Heart left ventricle (tissue), 16 donors: ENCODE measurements at regions of chr12 and their contacts with region 1.

Region 1: DNA sequence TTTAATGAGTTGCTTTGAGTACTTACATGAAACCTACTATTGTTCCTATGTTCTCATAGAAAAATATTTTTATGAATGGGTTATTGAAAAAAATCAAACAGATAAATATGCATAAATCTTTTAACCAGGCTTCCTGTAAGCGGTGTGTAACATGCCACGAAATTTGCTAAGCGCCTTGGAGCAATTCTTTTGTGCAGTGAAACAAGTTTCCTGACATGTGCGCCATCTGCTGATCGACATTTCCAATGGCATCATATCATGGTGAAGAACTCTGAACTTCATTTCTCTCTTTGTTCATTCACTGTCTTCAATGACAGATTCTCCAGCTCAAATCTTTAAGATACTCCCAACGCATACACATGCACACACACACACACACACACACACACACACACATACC is 145.6 kb upstream of the NAV3 start:
- DNase-seq: peak; percentile 33 to 55 (median 50)
- ATAC-seq: peak; percentile 58 to 82 (median 72)
- H3K4me3 ChIP-seq: peak overlapping the region in 6 of 12 donors; percentile 1 to 22 (median 11)
- H3K27ac ChIP-seq: no peak overlapping the region
- H3K4me1 ChIP-seq: peaks cover 0 to 6% (median 0%) of the 10 kb centered on the region in 12 donors
- H3K27me3 ChIP-seq: no peaks in the 10 kb centered on the region
- CTCF ChIP-seq: peak in 11 of 12 donors; percentile 33 to 70 (median 54)
- POLR2A ChIP-seq: no peak

Region 2: DNA sequence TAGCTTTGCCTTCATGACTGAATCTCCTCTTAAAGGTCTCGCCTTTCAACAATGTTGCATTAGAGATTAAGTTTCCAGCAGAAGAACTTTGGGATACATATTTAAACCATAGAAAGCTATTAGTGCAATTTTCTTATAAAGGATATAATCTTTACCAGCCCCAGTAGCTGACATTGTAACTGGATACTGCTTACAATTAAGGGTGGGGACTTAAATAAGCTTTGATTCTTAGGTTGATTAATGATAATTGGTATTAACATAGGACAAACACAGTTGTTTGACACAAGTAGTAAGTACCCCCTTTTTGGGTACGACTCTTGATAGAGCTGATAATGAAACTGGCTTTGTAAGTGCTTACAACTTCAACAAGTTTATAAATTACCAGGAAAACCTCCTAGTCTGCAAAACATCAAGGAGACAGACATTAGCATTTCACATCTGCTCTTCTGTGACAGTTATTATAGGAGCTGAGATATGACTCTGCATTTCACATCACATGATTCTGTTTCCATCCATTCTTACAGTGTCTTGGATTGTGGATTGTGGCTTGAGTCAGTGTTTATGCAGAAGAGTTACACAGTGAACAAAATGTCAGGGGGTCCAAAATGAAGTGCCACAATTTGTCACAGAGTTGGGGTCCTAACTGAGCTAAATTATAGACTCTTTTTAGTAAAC is 370.6 kb before region 1 on chr12:
- intact Hi-C with region 1: loop called in 1 of 10 experiments (anchors 10 kb)
- DNase-seq: no peak
- ATAC-seq: peak in 1 of 4 donors; percentile 33
- H3K4me3 ChIP-seq: no peak overlapping the region
- H3K27ac ChIP-seq: no peak overlapping the region
- H3K4me1 ChIP-seq: peaks cover 0 to 3% (median 0%) of the 10 kb centered on the region in 12 donors
- H3K27me3 ChIP-seq: no peaks in the 10 kb centered on the region
- CTCF ChIP-seq: no peak
- POLR2A ChIP-seq: no peak

Region 3: GRCh38 chr12:77433799-77434198 is 251.3 kb before region 1 on chr12:
- intact Hi-C with region 1: no loop called
- DNase-seq: no peak
- ATAC-seq: no peak
- H3K4me3 ChIP-seq: no peak overlapping the region
- H3K27ac ChIP-seq: no peak overlapping the region
- H3K4me1 ChIP-seq: peaks cover 0 to 6% (median 0%) of the 10 kb centered on the region in 12 donors
- H3K27me3 ChIP-seq: no peaks in the 10 kb centered on the region
- CTCF ChIP-seq: no peak
- POLR2A ChIP-seq: no peak

Region 4: DNA sequence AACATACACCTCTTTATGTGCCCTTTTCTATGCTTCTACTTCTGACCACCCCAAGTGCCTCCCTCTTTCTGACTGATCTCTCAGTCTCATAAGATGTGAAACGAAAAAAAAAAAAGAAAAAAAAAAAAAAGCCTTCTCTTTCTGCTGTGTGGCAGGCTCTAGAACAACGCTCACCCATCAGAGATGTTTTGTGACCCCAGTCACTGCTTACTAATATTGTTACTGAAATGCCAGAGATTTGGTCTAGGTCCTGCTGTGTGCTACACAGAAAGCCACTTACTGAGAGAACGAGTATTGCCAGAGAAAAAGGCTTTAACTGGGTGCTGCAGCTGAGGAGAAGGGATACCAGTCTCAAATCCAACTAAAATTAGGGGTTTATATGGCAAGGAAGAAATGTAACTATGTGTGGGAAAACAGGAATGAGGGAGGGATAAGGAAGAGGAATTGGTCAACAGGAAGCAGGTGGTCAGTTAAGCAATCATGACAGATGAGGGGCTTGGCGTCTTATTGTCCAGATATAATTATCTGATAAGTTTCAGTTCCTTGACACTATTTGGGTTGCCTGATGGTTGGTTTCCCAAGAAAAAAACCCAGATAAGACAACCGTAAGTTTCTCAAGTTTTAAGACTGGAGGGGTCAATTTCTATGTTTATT is 294.6 kb after region 1 on chr12:
- intact Hi-C with region 1: no loop called
- DNase-seq: no peak
- ATAC-seq: no peak
- H3K4me3 ChIP-seq: no peak overlapping the region
- H3K27ac ChIP-seq: no peak overlapping the region
- H3K4me1 ChIP-seq: peaks cover 0 to 3% (median 0%) of the 10 kb centered on the region in 12 donors
- H3K27me3 ChIP-seq: no peaks in the 10 kb centered on the region
- CTCF ChIP-seq: no peak
- POLR2A ChIP-seq: no peak

Region 5: GRCh38 chr12:78101946-78102635 is 417.0 kb after region 1 on chr12:
- intact Hi-C with region 1: no loop called
- DNase-seq: no peak
- ATAC-seq: no peak
- H3K4me3 ChIP-seq: no peak overlapping the region
- H3K27ac ChIP-seq: no peak overlapping the region
- H3K4me1 ChIP-seq: no peaks in the 10 kb centered on the region
- H3K27me3 ChIP-seq: no peaks in the 10 kb centered on the region
- CTCF ChIP-seq: no peak
- POLR2A ChIP-seq: no peak